GM12878 (cell line): ENCODE measurements at regions of chrX and their contacts with region 1.

Region 1: DNA sequence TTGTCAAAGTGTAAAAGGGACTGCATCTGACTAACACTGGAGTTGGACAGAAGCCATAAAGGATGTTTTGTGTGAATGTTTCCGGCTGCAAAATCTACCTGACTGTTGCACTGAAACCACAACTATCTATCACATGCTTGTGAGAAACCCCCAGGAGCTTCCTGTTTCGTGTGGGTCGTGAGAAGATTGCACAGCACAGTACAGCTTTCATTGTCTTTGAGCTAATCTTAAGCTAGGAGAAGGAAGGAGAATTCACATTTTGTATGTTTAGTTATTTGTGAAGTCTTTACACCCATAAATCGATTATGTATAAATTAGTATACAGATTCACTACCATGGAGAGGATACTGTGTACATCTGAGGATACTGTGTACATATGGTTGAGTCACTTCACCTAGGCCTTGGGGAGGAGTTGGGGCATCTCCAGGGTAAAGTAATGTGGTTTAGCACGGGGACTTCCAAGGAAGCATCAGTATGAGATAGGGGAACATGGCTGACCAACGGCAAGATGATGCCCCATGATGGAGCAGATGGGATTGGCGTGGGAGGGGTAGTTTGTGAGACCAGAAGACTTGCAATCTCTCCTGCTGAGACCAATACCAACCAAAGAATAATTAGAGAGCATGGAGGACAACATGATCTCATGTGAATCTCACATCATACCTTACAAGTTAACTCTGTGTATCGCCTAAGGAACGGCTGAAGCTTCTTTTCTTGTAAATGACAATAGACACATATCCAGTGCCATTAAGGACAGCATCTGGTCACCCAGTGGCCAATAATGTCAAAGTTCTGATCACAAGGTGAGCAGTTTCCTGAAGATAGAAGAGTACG is 43.1 kb upstream of the FAM9C start:
- DNase-seq: peak; percentile 99
- ATAC-seq: peak; percentile 54
- H3K4me3 ChIP-seq: no peak overlapping the region; the same call in 1 of the 2 replicates
- H3K27ac ChIP-seq: peak overlapping the region; percentile 100
- H3K4me1 ChIP-seq: peaks cover 89% of the 10 kb centered on the region
- H3K27me3 ChIP-seq: no peaks in the 10 kb centered on the region
- CTCF ChIP-seq: no peak
- EP300 ChIP-seq: peak; percentile 71 to 90
- POLR2A ChIP-seq: 0 out of 2 replicates have a peak, but pooled peaks have one; percentile 45
- RAD21 ChIP-seq: 0 out of 2 replicates have a peak, but pooled peaks have one; percentile 15

Region 2: DNA sequence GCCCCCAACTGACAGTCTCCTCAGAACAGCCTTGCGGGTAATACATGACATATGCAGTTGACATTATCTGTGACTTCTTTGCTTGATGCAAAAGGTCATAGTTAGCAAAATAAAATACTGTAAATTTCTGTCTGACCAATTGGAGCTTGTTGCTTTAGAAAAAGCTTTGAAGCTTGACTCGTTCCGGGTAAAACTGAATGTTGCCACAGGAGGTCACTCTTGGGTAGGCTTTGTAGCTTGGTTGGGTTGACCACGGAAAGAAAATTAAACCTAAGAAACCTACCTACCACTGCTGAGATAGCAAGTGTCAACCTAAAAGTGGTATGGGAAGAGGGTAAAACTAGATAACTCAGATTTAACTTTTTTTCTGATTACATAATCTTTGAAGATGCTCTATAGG is 273.1 kb before region 1 on chrX:
- CTCF ChIA-PET with region 1: no interaction called
- POLR2A ChIA-PET with region 1: no interaction called
- RAD21 ChIA-PET with region 1: interaction called, 5 read pairs
- SMC1A ChIA-PET with region 1: interaction called, 7 read pairs
- in situ Hi-C with region 1: no loop called
- intact Hi-C with region 1: loop called (anchors 2 kb)
- DNase-seq: peak; percentile 59
- ATAC-seq: peak; percentile 97
- H3K4me3 ChIP-seq: no peak overlapping the region
- H3K27ac ChIP-seq: no peak overlapping the region
- H3K4me1 ChIP-seq: no peaks in the 10 kb centered on the region
- H3K27me3 ChIP-seq: no peaks in the 10 kb centered on the region
- CTCF ChIP-seq: peak; percentile 66 to 86 (median 69)
- EP300 ChIP-seq: no peak
- POLR2A ChIP-seq: no peak
- RAD21 ChIP-seq: peak; percentile 98

Region 3: GRCh38 chrX:12955882-12956703 is 131.4 kb before region 1 on chrX:
- CTCF ChIA-PET with region 1: interaction called, 312 read pairs
- POLR2A ChIA-PET with region 1: interaction called, 63 read pairs
- RAD21 ChIA-PET with region 1: interaction called, 549 read pairs
- SMC1A ChIA-PET with region 1: interaction called, 632 read pairs
- in situ Hi-C with region 1: loop called (anchors 5 kb)
- intact Hi-C with region 1: no loop called
- DNase-seq: peak; percentile 77
- ATAC-seq: peak; percentile 59
- H3K4me3 ChIP-seq: peak overlapping the region; percentile 32
- H3K27ac ChIP-seq: peak overlapping the region; percentile 99
- H3K4me1 ChIP-seq: peaks cover 42% of the 10 kb centered on the region
- H3K27me3 ChIP-seq: no peaks in the 10 kb centered on the region
- CTCF ChIP-seq: no peak
- EP300 ChIP-seq: peak; percentile 48 to 62; a peak in 2 of 4 replicates
- POLR2A ChIP-seq: peak; percentile 30
- RAD21 ChIP-seq: no peak

Region 4: DNA sequence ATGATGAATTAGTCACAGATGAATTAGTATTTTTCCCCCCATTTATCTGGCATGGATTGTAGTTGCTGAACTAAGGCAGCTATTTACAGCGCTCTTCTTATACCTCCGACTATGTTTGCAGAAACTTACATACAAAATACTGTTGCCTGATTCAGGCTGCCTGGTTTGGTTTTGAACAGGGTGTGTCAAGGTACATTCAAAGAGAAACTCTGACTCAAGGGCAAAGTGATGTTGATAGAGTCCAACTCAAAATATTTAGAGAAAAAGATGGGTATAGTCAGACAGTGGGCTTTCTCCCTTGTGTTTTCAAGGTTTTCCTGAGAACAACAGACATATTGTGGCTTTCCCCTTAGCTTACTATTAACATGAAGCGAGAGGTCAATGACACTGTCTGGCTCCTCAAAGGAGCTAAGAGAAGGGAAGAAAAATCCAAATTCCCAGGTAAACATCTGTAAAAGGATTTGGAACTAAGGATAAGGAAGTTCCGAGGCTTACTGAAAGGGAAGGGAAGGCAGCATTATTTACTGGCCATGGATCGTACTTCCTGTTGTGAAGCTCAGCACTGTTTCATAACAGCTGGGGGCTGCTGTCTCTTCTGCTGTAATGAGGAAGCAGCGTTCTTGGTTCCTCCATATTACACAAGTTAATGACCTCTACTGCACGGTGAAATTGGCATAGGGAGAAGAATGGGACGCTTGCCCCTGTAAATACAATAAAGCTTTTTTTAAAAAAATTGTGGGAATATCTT is 74.0 kb before region 1 on chrX:
- CTCF ChIA-PET with region 1: interaction called, 33 read pairs
- POLR2A ChIA-PET with region 1: interaction called, 280 read pairs
- RAD21 ChIA-PET with region 1: interaction called, 689 read pairs
- SMC1A ChIA-PET with region 1: interaction called, 847 read pairs
- in situ Hi-C with region 1: no loop called
- intact Hi-C with region 1: no loop called
- DNase-seq: no peak
- ATAC-seq: peak; percentile 87
- H3K4me3 ChIP-seq: peak overlapping the region; percentile 14
- H3K27ac ChIP-seq: peak overlapping the region; percentile 96
- H3K4me1 ChIP-seq: peaks cover 63% of the 10 kb centered on the region
- H3K27me3 ChIP-seq: no peaks in the 10 kb centered on the region
- CTCF ChIP-seq: no peak
- EP300 ChIP-seq: 0 out of 4 replicates have a peak, but pooled peaks of 1 of the 2 experiments have one; percentile 2
- POLR2A ChIP-seq: no peak
- RAD21 ChIP-seq: no peak

Region 5: DNA sequence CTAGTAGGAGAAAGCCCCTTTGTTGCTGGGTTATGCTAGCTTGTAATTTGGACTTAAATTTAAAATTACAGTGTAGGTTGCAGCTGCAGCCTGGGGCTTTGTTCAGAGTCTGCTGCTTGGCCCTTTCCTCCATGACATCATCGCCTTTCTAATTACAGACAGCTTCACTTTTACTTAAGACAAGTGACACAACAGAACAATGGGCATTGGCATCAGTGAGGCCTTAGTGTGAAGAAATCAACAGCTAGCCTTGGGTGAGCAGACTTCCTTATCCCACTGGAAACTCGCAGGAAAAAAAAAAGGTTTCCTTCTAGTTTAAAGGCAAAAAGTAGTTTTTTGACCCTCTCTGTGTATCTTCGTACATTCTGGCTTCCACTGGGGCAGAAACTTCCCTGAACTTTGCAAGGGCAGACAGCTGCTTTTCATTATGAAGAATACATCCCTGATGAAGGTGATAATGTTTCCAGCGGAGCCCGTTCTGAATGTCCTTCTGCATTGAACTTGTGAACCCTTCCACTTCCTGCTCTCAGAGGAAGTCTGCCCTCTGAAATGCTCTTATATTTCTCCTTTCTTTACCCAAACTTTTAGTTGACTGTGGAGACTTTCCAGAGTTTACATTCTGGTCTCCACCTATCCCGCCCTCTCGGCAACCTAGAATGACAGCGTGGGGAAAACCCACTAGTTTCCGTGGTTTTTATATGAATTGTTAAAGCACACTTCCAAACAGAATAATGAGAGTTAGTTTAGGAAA is 80.1 kb after region 1 on chrX:
- CTCF ChIA-PET with region 1: interaction called, 5 read pairs
- POLR2A ChIA-PET with region 1: interaction called, 5 read pairs
- RAD21 ChIA-PET with region 1: interaction called, 8 read pairs
- SMC1A ChIA-PET with region 1: interaction called, 9 read pairs
- in situ Hi-C with region 1: no loop called
- intact Hi-C with region 1: loop called (anchors 5 kb)
- DNase-seq: no peak
- ATAC-seq: peak; percentile 75
- H3K4me3 ChIP-seq: no peak overlapping the region
- H3K27ac ChIP-seq: no peak overlapping the region
- H3K4me1 ChIP-seq: peaks cover 8% of the 10 kb centered on the region
- H3K27me3 ChIP-seq: no peaks in the 10 kb centered on the region
- CTCF ChIP-seq: no peak
- EP300 ChIP-seq: no peak
- POLR2A ChIP-seq: no peak
- RAD21 ChIP-seq: no peak

Region 6: GRCh38 chrX:13387666-13388494 is 300.3 kb after region 1 on chrX:
- CTCF ChIA-PET with region 1: no interaction called
- POLR2A ChIA-PET with region 1: no interaction called
- RAD21 ChIA-PET with region 1: no interaction called
- SMC1A ChIA-PET with region 1: no interaction called
- in situ Hi-C with region 1: no loop called
- intact Hi-C with region 1: loop called (anchors 5 kb)
- DNase-seq: no peak
- ATAC-seq: peak; percentile 84
- H3K4me3 ChIP-seq: no peak overlapping the region
- H3K27ac ChIP-seq: no peak overlapping the region
- H3K4me1 ChIP-seq: no peaks in the 10 kb centered on the region
- H3K27me3 ChIP-seq: no peaks in the 10 kb centered on the region
- CTCF ChIP-seq: no peak
- EP300 ChIP-seq: no peak
- POLR2A ChIP-seq: no peak
- RAD21 ChIP-seq: no peak

Region 7: GRCh38 chrX:13646154-13646549 is 558.6 kb after region 1 on chrX:
- CTCF ChIA-PET with region 1: interaction called, 4 read pairs
- POLR2A ChIA-PET with region 1: no interaction called
- RAD21 ChIA-PET with region 1: interaction called, 6 read pairs
- SMC1A ChIA-PET with region 1: no interaction called
- in situ Hi-C with region 1: no loop called
- intact Hi-C with region 1: loop called (anchors 2 kb)
- DNase-seq: no peak
- ATAC-seq: peak; percentile 80
- H3K4me3 ChIP-seq: no peak overlapping the region
- H3K27ac ChIP-seq: no peak overlapping the region
- H3K4me1 ChIP-seq: no peaks in the 10 kb centered on the region
- H3K27me3 ChIP-seq: no peaks in the 10 kb centered on the region; a peak in 1 of 4 replicates
- CTCF ChIP-seq: peak; percentile 67 to 80 (median 76)
- EP300 ChIP-seq: no peak
- POLR2A ChIP-seq: no peak
- RAD21 ChIP-seq: peak; percentile 72